Activated naive CD4-positive, alpha-beta T cell treated with anti-CD3 and anti-CD28 coated beads, Interleukin-2, amount 10 ng/mL, durations not matched to agents 7 days and 5 days (primary cell): ENCODE measurements at regions of chr15 and their contacts with region 1.

Region 1: GRCh38 chr15:67068710-67069400 is 3.5 kb downstream of the SMAD3 start:
- DNase-seq: peak; percentile 42
- H3K4me3 Mint-ChIP-seq: peak overlapping the region; percentile 96
- H3K27ac Mint-ChIP-seq: peak overlapping the region; percentile 88
- H3K4me1 Mint-ChIP-seq: peaks cover 67% of the 10 kb centered on the region
- H3K27me3 Mint-ChIP-seq: peaks cover 13% of the 10 kb centered on the region

Region 2: DNA sequence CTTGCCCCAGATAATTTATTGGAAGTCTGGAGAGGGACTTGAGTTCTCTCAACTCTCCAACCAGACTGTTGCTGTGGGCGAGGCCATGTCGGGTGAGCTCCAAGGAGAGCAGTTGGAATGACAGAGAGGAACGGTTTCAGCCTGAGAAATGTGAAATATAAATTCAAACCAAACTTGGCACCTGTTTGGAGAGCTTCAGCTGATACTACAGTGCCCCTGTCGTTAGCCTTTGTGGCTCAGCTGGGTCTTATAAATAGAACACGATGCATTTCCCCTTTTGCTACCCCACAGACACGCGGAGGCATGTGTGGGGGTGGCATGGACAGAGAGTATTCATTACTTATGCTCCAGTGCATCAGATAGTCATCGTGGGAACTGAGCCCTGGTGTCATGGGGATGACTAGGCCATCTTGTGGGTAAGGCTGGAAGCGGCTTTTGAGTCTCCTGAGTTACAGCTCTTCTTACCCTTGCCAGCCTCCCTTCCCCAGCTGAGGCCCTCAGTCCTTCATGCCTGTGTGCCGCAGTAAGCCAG is 12.1 kb after region 1 on chr15:
- CTCF ChIA-PET with region 1: interaction called, 19 read pairs
- DNase-seq: peak; percentile 57
- H3K4me3 Mint-ChIP-seq: no peak overlapping the region
- H3K27ac Mint-ChIP-seq: peak overlapping the region; percentile 96
- H3K4me1 Mint-ChIP-seq: peaks cover 96% of the 10 kb centered on the region
- H3K27me3 Mint-ChIP-seq: no peaks in the 10 kb centered on the region